Endothelial cell of umbilical vein (primary cell): ENCODE measurements at regions of chr6 and their contacts with region 1.

Region 1: DNA sequence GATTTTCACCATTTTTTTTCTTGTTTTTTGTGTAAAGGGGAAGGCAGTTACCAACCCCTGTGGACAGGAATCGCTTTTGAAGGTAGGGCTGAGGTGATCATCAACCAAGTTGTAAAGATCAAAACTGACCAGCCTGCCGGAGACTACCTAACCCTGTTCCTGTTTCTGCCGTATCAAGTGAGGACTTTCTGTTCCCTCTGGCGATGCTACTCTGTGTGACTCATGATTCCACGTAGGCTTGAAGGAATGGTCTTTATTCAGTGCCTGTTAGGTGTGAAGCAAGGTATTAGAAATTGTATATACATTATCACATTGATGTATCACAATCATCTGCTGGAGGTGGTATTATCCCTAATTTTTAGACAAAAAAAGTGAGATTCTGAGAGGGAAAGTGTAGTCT is 161.3 kb downstream of the SOX4 start:
- DNase-seq: peak; percentile 31
- H3K4me3 ChIP-seq: no peak overlapping the region
- H3K27ac ChIP-seq: peak overlapping the region; percentile 64
- H3K4me1 ChIP-seq: peaks cover 48% of the 10 kb centered on the region
- H3K27me3 ChIP-seq: no peaks in the 10 kb centered on the region
- CTCF ChIP-seq: no peak
- POLR2A ChIP-seq: no peak

Region 2: GRCh38 chr6:21731411-21732031 is 23.4 kb before region 1 on chr6:
- CTCF ChIA-PET with region 1: no interaction called
- POLR2A ChIA-PET with region 1: no interaction called
- dilution Hi-C with region 1: no loop called
- intact Hi-C with region 1: loop called (anchors 2 kb)
- DNase-seq: peak; percentile 22
- H3K4me3 ChIP-seq: no peak overlapping the region
- H3K27ac ChIP-seq: no peak overlapping the region
- H3K4me1 ChIP-seq: peaks cover 26% of the 10 kb centered on the region
- H3K27me3 ChIP-seq: no peaks in the 10 kb centered on the region
- CTCF ChIP-seq: no peak
- POLR2A ChIP-seq: no peak